ENCODE measurements at regions of chr3 and their contacts with region 1.

Region 1: DNA sequence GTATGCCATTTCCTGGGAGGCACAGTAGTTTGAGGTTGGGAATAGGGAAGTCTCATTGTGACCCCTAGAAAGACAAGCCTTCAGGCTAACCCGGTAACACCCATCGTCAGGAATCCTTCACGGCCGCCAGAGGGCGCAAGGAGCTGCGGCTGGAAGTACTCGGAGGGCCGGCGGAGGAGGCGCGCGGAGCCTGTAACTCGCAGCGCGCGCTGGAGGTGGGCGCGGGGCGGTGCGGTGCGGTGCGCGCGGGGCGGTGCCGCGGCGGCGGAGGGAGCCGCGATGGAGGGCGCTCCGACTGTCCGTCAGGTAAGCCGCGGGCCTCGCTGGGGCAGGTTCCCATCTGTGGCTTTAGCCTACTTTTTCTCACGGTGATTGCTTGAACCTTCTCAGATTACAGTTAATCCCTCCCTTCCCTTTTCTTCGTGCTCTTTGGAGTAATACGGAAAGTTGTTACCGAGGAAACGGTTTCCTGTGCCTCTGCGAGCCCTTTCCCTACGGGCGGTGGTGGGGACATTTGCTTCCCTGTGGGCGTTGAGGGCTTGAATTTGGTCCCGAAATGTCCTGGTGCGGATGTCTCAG is at the start of gene GRAMD1C:
- DNase-seq: peak; percentile 83 to 87
- H3K4me3 ChIP-seq: peak within 1 kb of the TSS in 2 of 3 donors; percentile 26 to 36
- H3K27ac ChIP-seq: peak within 1 kb of the TSS in 2 of 3 donors; percentile 13 to 48
- H3K4me1 ChIP-seq: no peaks in the 10 kb centered on the region
- H3K27me3 ChIP-seq: no peaks in the 10 kb centered on the region
- CTCF ChIP-seq: peak; percentile 55 to 91 (median 88)
- POLR2A ChIP-seq: peak in 1 of 2 donors; percentile 27
- total RNA-seq, gene GRAMD1C: 5.8 to 20.2 (median 9.1) TPM

Region 2: DNA sequence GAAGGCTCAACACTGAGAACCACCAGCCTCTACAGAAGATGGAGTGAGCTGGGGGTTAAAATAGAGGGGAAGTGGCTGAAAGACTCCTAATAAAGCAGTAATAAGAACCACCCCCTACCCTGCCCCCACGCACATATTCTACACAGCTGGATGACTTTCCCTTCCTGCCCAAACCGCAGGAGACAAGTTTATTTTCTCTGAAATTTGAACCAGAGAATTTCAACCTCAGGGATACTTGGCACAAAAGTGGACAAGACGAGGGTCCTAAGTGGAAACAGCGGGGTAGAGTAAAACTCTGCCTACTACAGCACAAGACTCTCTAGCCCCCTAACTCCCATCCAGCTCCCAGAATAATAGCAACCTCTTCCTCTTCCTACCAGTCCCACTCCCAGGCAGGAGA is 170.7 kb before region 1 on chr3:
- intact Hi-C with region 1: no loop called
- DNase-seq: peak; percentile 12 to 31
- H3K4me3 ChIP-seq: no peak overlapping the region
- H3K27ac ChIP-seq: no peak overlapping the region
- H3K4me1 ChIP-seq: peaks cover 5 to 13% of the 10 kb centered on the region in 2 donors
- H3K27me3 ChIP-seq: no peaks in the 10 kb centered on the region
- CTCF ChIP-seq: no peak
- POLR2A ChIP-seq: no peak

Region 3: GRCh38 chr3:113736548-113737089 is 102.1 kb before region 1 on chr3:
- intact Hi-C with region 1: loop called (anchors 10 kb)
- DNase-seq: peak in 1 of 2 donors; percentile 15
- H3K4me3 ChIP-seq: no peak overlapping the region
- H3K27ac ChIP-seq: peak overlapping the region in 1 of 3 donors; percentile 16
- H3K4me1 ChIP-seq: peaks cover 4 to 9% of the 10 kb centered on the region in 2 donors
- H3K27me3 ChIP-seq: no peaks in the 10 kb centered on the region
- CTCF ChIP-seq: peak; percentile 24 to 81 (median 66)
- POLR2A ChIP-seq: no peak

Region 4: DNA sequence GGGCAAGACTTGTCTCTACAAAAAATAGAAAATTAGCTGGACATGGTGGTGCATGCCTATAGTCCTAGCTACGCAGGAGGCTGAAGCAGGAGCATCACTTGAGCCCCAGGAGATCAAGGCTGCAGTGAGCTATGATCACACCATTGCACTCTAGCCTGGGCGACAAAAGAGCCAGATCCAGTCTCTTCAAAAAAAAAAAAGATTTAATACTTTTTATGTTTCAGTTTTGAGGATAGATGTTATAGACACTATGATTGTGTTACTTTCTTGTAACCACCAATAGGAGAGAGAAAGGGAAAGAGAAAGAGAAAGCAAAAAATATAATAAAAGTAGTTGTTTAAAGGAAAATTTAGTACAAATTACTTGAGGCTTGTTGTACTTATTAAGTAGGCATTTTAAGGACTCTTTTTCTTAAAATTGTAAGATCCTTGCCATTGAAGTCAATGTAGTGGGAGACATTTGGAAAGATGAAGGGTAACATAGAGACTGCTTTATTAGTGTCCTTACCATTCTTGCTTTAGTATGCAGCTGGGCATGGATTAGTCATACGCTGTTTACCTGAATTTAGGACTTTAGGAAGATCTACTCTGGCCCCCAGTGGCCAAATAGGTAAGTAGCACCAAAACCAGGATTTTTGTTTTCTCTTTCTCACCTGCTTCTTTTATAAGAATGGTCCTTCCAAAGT is 74.0 kb after region 1 on chr3:
- intact Hi-C with region 1: loop called (anchors 5 kb)
- DNase-seq: peak; percentile 34 to 45
- H3K4me3 ChIP-seq: no peak overlapping the region
- H3K27ac ChIP-seq: peak overlapping the region in 1 of 3 donors; percentile 23
- H3K4me1 ChIP-seq: no peaks in the 10 kb centered on the region
- H3K27me3 ChIP-seq: no peaks in the 10 kb centered on the region
- CTCF ChIP-seq: peak; percentile 19 to 88 (median 72)
- POLR2A ChIP-seq: no peak